Endothelial cell of umbilical vein (primary cell): ENCODE measurements at regions of chr6 and their contacts with region 1.

Region 1: GRCh38 chr6:134938896-134939295 is 11.0 kb downstream of the ALDH8A1 start:
- DNase-seq: no peak
- H3K4me3 ChIP-seq: no peak overlapping the region
- H3K27ac ChIP-seq: no peak overlapping the region
- H3K4me1 ChIP-seq: no peaks in the 10 kb centered on the region
- H3K27me3 ChIP-seq: no peaks in the 10 kb centered on the region
- CTCF ChIP-seq: no peak
- POLR2A ChIP-seq: no peak

Region 2: DNA sequence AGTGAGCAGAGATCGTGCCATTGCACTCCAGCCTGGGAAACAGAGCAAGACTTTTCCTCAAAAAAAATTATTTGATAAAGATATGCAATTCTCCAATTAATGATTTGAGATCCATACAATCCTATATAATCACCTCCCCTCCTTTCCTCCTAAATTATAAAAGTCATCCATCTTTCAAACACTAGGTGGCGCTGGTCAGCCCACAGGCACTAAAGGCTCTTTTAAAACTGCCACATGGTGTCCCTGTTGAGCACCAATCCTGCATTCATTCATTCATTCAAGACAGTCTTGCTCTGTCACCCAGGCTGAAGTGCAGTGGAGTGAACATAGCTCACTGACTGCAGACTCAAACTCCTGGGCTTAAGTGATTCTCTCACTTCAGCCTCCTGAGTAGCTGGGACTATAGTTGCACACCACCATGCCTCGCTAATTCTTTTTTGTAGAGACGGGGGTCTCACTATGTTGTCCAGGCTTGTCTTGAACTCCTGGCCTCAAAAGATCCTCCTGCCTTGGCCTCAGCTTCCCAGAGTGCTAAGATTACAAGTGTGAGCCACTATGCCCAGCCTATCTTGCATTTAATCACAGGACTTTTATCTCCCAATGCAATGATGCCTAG is 827.7 kb before region 1 on chr6:
- CTCF ChIA-PET with region 1: interaction called, 93 read pairs
- POLR2A ChIA-PET with region 1: no interaction called
- dilution Hi-C with region 1: no loop called
- intact Hi-C with region 1: loop called (anchors 1 kb)
- DNase-seq: peak; percentile 59
- H3K4me3 ChIP-seq: no peak overlapping the region
- H3K27ac ChIP-seq: no peak overlapping the region
- H3K4me1 ChIP-seq: no peaks in the 10 kb centered on the region
- H3K27me3 ChIP-seq: peaks cover 3 to 6% of the 10 kb centered on the region in 2 experiments
- CTCF ChIP-seq: peak; percentile 81 to 85
- POLR2A ChIP-seq: no peak

Region 3: DNA sequence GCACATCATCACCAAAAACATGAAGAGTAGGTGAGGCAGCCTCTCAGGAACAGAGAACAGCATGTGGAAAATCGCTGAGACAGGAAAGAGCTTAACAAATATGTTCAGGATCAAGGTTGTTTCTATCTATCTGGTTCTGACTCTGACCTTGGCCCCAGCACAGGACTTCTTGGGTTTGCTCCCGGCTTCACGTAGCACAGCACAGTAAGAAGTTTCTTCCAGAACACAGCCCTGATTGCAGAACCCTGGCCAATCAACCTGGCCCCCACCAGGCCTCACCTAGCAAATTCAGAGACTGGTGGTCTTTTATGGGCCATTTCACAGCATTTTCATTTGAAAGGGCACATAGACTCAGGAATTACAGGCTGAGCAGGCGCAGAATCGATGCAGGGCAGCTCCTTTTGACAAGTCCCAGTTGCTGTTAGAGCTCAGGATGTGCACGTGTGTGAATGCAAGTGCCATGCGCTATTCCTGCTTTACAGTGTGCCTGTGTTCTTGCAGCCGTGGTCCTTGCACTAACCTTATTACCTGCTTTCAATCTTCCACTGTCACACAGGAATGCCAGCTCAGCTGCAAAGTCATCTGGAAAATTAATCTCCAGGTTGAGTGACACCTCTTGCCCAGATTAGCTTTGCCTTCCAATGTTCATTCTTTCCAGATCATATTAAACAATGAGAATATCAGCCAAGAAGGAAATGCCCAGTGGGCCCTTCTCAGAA is 786.0 kb before region 1 on chr6:
- CTCF ChIA-PET with region 1: interaction called, 111 read pairs
- POLR2A ChIA-PET with region 1: no interaction called
- dilution Hi-C with region 1: no loop called
- intact Hi-C with region 1: loop called (anchors 1 kb)
- DNase-seq: no peak
- H3K4me3 ChIP-seq: no peak overlapping the region
- H3K27ac ChIP-seq: no peak overlapping the region
- H3K4me1 ChIP-seq: no peaks in the 10 kb centered on the region
- H3K27me3 ChIP-seq: no peaks in the 10 kb centered on the region
- CTCF ChIP-seq: no peak
- POLR2A ChIP-seq: no peak

Region 4: DNA sequence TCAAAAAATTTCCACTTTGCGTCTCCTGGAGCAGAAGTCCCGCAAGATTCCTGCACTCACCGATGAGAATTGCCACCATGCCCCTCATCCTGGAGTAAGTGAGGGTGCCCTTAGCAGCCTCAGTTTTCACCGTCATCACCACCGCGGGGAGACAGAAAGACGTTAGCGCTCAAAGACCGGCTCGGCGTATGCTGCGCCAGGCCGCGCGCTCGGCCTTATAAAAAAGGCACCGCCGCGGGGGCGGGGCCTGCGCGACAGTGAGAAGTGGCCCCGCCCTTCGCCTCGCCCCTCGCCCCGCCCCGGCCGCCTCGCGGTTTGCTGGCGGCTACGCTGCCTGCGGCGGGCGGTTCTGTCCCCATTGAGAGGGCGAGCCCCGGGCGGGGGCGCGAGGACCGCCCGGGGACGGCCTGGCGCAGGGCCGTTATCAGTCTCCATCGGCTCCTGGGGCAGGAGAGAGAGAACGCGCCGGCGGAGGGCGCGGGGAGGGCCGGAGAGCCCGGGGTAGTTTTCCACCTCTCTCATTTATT is 764.2 kb before region 1 on chr6:
- CTCF ChIA-PET with region 1: interaction called, 27 read pairs
- POLR2A ChIA-PET with region 1: interaction called, 5 read pairs
- dilution Hi-C with region 1: no loop called
- intact Hi-C with region 1: loop called (anchors 1 kb)
- DNase-seq: peak; percentile 90
- H3K4me3 ChIP-seq: peak overlapping the region; percentile 85 to 100 (median 98)
- H3K27ac ChIP-seq: peak overlapping the region; percentile 98
- H3K4me1 ChIP-seq: peaks cover 59% of the 10 kb centered on the region
- H3K27me3 ChIP-seq: no peaks in the 10 kb centered on the region
- CTCF ChIP-seq: no peak
- POLR2A ChIP-seq: peak; percentile 100

Region 5: DNA sequence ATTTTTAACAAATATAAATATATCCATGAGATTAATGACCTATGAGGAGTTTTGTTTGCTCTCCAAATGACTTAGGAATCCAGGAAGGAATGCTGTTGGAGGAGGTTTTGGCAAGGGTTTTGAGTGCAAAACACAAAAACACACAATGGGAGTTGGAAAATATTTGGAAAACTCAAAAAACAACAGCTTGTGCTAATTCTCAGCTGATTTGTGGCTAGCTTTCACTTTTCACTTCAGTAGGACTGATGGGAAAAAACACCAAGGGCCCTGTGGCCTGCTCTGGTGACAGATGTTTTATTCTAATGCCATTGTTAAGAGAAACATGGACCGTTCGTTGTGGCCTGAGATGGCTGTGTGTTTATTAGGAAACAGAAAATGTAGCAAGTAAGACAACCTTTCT is 102.9 kb before region 1 on chr6:
- CTCF ChIA-PET with region 1: interaction called, 16 read pairs
- POLR2A ChIA-PET with region 1: no interaction called
- dilution Hi-C with region 1: no loop called
- intact Hi-C with region 1: no loop called
- DNase-seq: no peak
- H3K4me3 ChIP-seq: no peak overlapping the region
- H3K27ac ChIP-seq: no peak overlapping the region
- H3K4me1 ChIP-seq: no peaks in the 10 kb centered on the region
- H3K27me3 ChIP-seq: peaks cover 0 to 5% of the 10 kb centered on the region in 2 experiments
- CTCF ChIP-seq: no peak
- POLR2A ChIP-seq: no peak

Region 6: DNA sequence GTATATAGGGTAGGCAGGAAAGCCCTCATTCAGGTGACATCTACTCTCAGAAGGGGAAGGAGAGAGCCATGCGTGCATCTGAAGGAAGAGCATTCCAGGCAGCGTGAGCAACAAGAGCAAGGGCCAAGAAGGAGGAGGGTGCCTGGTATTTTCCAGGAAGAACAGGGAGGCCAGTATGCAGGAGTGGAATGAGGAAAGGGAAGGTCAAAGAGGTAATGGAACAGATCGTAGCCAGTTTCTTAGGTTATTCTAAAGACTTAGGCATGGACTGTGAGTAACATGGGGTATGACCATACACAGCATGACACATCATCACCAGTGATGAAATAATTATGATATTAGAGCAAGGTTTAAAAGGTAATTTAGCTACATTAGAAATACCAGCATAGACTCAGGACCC is 13.1 kb before region 1 on chr6:
- CTCF ChIA-PET with region 1: interaction called, 19 read pairs
- POLR2A ChIA-PET with region 1: no interaction called
- dilution Hi-C with region 1: no loop called
- intact Hi-C with region 1: no loop called
- DNase-seq: peak; percentile 81
- H3K4me3 ChIP-seq: no peak overlapping the region
- H3K27ac ChIP-seq: no peak overlapping the region
- H3K4me1 ChIP-seq: no peaks in the 10 kb centered on the region
- H3K27me3 ChIP-seq: no peaks in the 10 kb centered on the region
- CTCF ChIP-seq: no peak
- POLR2A ChIP-seq: no peak

Region 7: GRCh38 chr6:135002229-135002844 is 63.4 kb after region 1 on chr6:
- CTCF ChIA-PET with region 1: interaction called, 23 read pairs
- POLR2A ChIA-PET with region 1: no interaction called
- dilution Hi-C with region 1: no loop called
- intact Hi-C with region 1: loop called (anchors 2 kb)
- DNase-seq: peak; percentile 45
- H3K4me3 ChIP-seq: no peak overlapping the region
- H3K27ac ChIP-seq: no peak overlapping the region
- H3K4me1 ChIP-seq: no peaks in the 10 kb centered on the region
- H3K27me3 ChIP-seq: no peaks in the 10 kb centered on the region
- CTCF ChIP-seq: peak; percentile 36 to 38
- POLR2A ChIP-seq: no peak

Region 8: DNA sequence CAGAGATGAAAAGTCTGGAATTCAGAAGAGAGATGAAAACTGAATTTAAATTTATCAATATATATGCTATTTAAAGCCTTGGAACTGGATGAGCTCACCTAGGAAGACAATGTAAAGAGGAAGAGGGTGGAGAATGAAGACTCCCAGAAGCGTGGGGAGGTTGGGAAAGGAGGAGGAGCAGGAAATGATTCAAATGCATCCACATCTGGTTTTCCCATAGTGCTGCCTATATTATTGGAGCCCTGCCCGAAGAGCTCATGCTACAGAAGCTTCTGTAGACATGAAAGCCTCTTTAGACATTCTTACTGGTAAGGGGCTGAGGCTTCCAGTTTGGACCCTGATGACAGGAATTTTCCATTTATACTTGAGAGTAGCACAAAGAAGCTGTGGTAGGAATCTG is 931.8 kb after region 1 on chr6:
- CTCF ChIA-PET with region 1: no interaction called
- POLR2A ChIA-PET with region 1: no interaction called
- dilution Hi-C with region 1: no loop called
- intact Hi-C with region 1: no loop called
- DNase-seq: peak; percentile 41
- H3K4me3 ChIP-seq: no peak overlapping the region
- H3K27ac ChIP-seq: no peak overlapping the region
- H3K4me1 ChIP-seq: peaks cover 12% of the 10 kb centered on the region
- H3K27me3 ChIP-seq: no peaks in the 10 kb centered on the region
- CTCF ChIP-seq: no peak
- POLR2A ChIP-seq: no peak